ENCODE measurements at regions of chr4 and their contacts with region 1.

Region 1: DNA sequence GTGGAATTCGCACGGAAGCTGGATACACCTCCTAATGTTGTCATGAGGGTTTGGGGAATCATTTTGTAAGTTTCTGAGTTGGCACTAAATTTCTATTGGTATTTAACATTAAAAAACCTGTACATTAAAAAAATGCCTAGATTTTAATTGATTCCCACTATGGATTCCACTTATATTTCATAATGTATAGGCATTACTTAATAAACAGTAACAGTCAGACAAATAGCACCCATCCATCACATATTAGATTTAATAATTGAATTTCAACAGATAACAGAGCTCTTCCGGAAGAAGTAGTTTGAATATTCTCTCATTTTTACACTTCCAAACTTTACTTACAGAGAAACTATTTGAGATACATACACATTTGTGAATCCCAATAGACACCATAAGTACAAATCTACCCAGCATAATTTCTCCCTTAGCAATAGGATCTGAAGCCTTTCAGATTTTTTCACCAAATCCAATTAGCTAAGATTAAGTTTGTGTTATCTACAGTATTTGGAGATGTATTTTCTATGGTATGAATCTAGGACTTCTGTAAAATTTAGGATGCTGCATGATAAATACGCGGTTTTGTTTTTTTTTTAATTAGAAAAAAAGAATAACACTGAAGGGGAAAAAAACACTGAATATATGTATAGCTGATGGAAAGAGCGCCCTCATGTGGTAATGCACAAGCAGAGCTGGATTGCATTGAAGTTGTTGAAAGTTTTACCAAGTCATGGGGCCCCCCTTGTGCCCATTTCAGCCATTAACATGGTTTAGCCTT is 12.2 kb upstream of the ODAM start:
- DNase-seq: peak; percentile 71
- ATAC-seq: peak; percentile 70
- H3K4me3 ChIP-seq: no peak overlapping the region
- H3K27ac ChIP-seq: no peak overlapping the region
- H3K4me1 ChIP-seq: no peaks in the 10 kb centered on the region
- H3K27me3 ChIP-seq: peaks cover 27% of the 10 kb centered on the region; the same call in 1 of the 2 replicates
- CTCF ChIP-seq: peak; percentile 95

Region 2: DNA sequence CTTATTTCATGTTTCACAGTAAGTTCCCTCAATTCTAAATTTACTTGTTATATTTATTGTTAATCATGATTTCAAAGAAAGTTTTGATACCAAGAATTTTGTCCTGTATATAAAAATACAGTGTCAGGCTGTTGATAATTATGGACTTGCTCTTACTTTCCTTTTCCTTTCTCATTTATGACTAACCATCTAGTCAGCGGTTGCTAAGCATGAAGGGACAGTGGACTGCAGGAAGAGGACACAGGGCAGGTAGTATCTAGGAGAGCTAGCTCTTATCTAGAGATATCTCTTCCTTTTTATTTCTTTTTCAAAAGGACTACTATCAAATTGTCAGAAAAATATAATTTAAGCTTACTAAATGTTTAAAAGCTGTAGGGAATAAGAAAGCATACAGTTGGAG is 216.0 kb after region 1 on chr4:
- CTCF ChIA-PET with region 1: no interaction called
- POLR2A ChIA-PET with region 1: no interaction called
- intact Hi-C with region 1: no loop called
- DNase-seq: peak; percentile 31
- ATAC-seq: peak; percentile 31; the same call in 1 of the 2 replicates
- H3K4me3 ChIP-seq: no peak overlapping the region
- H3K27ac ChIP-seq: no peak overlapping the region
- H3K4me1 ChIP-seq: no peaks in the 10 kb centered on the region
- H3K27me3 ChIP-seq: 0 out of 2 replicates have a peak, but pooled peaks cover 6% of the 10 kb centered on the region
- CTCF ChIP-seq: no peak

Region 3: DNA sequence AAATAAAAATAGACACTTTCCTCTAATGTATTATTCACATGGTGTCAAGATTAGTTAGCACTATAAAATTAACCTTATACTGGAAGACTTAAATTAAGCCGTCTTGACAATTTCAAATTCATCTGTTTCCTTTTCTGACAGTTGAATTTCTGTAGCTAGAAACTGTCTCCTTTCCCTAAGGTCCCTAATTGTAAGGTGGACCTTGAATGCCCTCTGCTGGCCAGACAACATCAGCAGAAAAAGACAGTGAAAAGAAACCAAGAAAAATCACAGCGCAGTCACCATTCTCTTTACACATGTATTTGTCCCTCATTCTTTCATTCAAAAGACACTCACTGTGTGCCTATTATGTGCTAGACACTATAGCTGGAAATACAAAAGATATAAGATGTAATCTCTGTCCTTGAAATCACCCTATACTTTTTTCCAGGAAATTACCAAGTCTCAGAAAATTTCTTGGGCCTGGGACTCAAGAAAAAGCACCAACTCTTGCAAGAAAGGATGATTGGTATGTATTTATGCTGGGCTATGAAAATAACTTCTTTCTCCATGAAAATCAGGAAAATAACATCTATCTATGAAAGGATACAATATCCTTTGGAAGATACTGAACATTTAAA is 376.0 kb after region 1 on chr4:
- CTCF ChIA-PET with region 1: interaction called, 4 read pairs
- POLR2A ChIA-PET with region 1: no interaction called
- intact Hi-C with region 1: loop called (anchors 2 kb)
- DNase-seq: peak; percentile 79
- ATAC-seq: peak; percentile 82
- H3K4me3 ChIP-seq: no peak overlapping the region
- H3K27ac ChIP-seq: no peak overlapping the region
- H3K4me1 ChIP-seq: no peaks in the 10 kb centered on the region
- H3K27me3 ChIP-seq: peaks cover 18% of the 10 kb centered on the region
- CTCF ChIP-seq: peak; percentile 96